ENCODE measurements at regions of chr1 and their contacts with region 1.

Region 1: DNA sequence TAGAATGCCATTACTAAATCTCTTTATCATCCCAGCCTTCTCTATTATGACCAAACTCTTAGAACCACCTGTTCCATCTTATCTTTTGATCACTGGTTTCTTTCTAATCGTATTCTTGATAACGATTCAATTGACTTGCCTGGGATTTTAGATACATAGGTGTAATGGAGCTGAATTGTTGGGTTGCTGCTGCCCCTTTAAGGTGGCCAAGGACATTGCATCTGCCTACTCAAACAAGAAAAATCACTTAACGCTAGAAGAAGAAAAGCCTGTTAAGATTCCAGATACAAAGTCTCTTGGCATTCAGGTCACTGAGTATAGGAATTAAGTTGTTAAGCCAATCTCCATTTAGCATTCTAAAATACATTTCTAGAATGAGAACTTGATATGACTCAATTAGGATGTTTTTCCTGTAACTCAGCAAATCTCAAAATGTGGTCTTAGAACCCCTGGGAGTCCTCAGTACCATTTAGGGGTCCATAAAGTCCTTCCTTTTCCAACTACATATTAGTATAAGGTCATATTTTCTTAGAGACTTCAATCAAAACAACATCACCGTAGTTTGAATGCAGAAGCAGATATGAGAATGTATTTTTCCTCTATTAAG is 12.4 kb downstream of the NEXN start:
- DNase-seq: no peak
- ATAC-seq: peak; percentile 55 to 59
- H3K4me3 ChIP-seq: peak overlapping the region in 3 of 4 donors; percentile 0 to 24 (median 21)
- H3K27ac ChIP-seq: peak overlapping the region; percentile 74 to 86 (median 80)
- H3K4me1 ChIP-seq: peaks cover 39 to 53% of the 10 kb centered on the region in 2 donors
- H3K27me3 ChIP-seq: no peaks in the 10 kb centered on the region
- CTCF ChIP-seq: peak; percentile 44 to 67 (median 58)
- POLR2A ChIP-seq: no peak

Region 2: GRCh38 chr1:77759071-77760028 is 141.4 kb before region 1 on chr1 and contains the start of gene USP33:
- in situ Hi-C with region 1: no loop called
- intact Hi-C with region 1: loop called (anchors 5 kb)
- DNase-seq: peak; percentile 78 to 84
- ATAC-seq: peak; percentile 88 to 93
- H3K4me3 ChIP-seq: peak within 1 kb of the TSS; percentile 84 to 100 (median 94)
- H3K27ac ChIP-seq: peak within 1 kb of the TSS; percentile 82 to 97 (median 88)
- H3K4me1 ChIP-seq: peaks cover 29 to 36% of the 10 kb centered on the region in 2 donors
- H3K27me3 ChIP-seq: no peaks in the 10 kb centered on the region
- CTCF ChIP-seq: no peak
- POLR2A ChIP-seq: peak; percentile 78 to 85
- total RNA-seq, gene USP33: 31.1 to 51.8 (median 34.6) TPM

Region 3: DNA sequence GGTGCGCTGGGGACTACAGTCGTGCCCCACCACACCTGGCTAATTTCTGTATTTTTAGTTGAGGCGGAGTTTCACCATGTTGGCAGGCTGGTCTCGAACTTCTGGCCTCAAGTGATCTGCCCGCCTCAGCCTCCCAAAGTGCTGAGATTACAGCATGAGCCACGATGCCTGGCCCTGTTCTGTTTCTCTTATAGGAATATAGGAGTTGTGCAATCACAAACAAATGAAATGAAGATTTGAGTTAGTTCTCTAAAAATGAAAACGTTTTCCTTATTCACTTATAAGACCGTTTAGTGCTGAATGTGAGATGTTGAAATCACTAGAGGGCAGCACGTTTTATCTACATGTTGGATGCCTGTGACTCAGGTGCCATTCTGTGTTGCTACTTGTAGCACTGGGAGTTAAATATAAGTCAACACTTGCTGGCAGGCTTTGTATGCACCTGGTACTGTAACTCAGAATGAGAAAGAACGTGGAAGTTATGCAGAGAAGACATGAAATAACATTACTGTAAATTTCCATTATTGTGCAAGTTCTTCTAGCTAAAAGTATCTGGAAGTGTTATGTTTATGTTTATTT is 75.6 kb before region 1 on chr1:
- in situ Hi-C with region 1: loop called in 1 of 4 experiments (anchors 5 kb)
- intact Hi-C with region 1: loop called (anchors 1 kb)
- DNase-seq: peak; percentile 90
- ATAC-seq: peak; percentile 88 to 92
- H3K4me3 ChIP-seq: no peak overlapping the region
- H3K27ac ChIP-seq: peak overlapping the region; percentile 91 to 100 (median 97)
- H3K4me1 ChIP-seq: peaks cover 32 to 44% of the 10 kb centered on the region in 2 donors
- H3K27me3 ChIP-seq: no peaks in the 10 kb centered on the region
- CTCF ChIP-seq: peak in 1 of 5 experiments; percentile 11
- POLR2A ChIP-seq: peak in 1 of 2 donors; percentile 7

Region 4: GRCh38 chr1:78045926-78046778 is 145.4 kb after region 1 on chr1 and contains the start of gene GIPC2:
- in situ Hi-C with region 1: no loop called
- intact Hi-C with region 1: loop called (anchors 10 kb)
- DNase-seq: peak in 1 of 2 donors; percentile 23
- ATAC-seq: peak; percentile 51 to 75
- H3K4me3 ChIP-seq: peak within 1 kb of the TSS; percentile 66 to 87 (median 76)
- H3K27ac ChIP-seq: peak within 1 kb of the TSS; percentile 70 to 84 (median 78)
- H3K4me1 ChIP-seq: peaks cover 17 to 34% of the 10 kb centered on the region in 2 donors
- H3K27me3 ChIP-seq: no peaks in the 10 kb centered on the region
- CTCF ChIP-seq: no peak
- POLR2A ChIP-seq: peak in 1 of 2 donors; percentile 5
- total RNA-seq, gene GIPC2: 0.67 to 1.5 (median 1.3) TPM